Endothelial cell of umbilical vein (primary cell): ENCODE measurements at regions of chr1 and their contacts with region 1.

Region 1: DNA sequence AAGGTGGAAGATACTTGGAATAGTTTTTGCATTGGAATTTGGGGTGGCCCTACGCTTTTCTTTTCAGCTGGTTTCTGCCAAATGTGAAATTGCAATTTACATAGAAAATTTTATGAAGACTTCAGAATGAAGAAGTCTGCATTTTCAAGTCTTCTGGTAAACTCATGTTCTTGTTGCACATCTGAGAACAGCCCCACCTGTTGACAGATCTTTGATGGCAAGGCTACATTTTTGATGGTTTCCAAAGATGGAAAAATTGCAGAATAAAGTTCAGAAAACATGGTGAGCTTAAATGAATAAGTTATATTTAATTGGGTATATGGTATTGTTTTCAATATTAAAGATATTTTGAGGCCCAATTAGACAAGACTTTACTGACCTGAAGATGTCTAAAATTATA is 25.4 kb downstream of the OLFM3 start:
- DNase-seq: no peak
- H3K4me3 ChIP-seq: no peak overlapping the region
- H3K27ac ChIP-seq: no peak overlapping the region
- H3K4me1 ChIP-seq: no peaks in the 10 kb centered on the region
- H3K27me3 ChIP-seq: no peaks in the 10 kb centered on the region
- CTCF ChIP-seq: no peak
- POLR2A ChIP-seq: no peak

Region 2: DNA sequence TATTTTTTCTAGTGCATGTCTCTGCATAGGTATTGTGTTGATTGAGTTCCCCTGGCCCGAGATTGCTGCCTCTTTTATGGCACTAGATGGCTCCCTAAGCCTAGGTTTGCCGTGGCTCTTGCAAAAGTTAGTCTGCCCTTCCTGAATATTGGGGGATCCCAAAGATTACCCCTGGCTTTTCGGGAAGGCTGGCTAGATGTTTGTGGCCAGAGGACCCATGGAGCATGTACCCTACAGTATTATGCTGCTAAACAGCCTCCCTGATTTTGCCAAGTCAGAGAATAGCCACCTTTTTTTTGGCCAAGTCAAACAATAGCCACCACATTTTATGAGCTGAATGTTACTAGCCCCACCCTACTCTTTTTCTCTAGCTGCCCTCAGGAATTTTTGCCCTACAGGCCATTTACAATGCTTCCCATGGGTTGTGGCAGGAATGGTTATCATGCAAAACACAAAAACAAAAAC is 317.8 kb before region 1 on chr1:
- CTCF ChIA-PET with region 1: interaction called, 11 read pairs
- POLR2A ChIA-PET with region 1: no interaction called
- dilution Hi-C with region 1: no loop called
- intact Hi-C with region 1: no loop called
- DNase-seq: peak; percentile 39
- H3K4me3 ChIP-seq: no peak overlapping the region
- H3K27ac ChIP-seq: no peak overlapping the region
- H3K4me1 ChIP-seq: no peaks in the 10 kb centered on the region
- H3K27me3 ChIP-seq: peaks cover 2 to 8% of the 10 kb centered on the region in 2 experiments
- CTCF ChIP-seq: peak; percentile 48 to 54
- POLR2A ChIP-seq: no peak